ENCODE measurements at regions of chr2 and their contacts with region 1.

Region 1: DNA sequence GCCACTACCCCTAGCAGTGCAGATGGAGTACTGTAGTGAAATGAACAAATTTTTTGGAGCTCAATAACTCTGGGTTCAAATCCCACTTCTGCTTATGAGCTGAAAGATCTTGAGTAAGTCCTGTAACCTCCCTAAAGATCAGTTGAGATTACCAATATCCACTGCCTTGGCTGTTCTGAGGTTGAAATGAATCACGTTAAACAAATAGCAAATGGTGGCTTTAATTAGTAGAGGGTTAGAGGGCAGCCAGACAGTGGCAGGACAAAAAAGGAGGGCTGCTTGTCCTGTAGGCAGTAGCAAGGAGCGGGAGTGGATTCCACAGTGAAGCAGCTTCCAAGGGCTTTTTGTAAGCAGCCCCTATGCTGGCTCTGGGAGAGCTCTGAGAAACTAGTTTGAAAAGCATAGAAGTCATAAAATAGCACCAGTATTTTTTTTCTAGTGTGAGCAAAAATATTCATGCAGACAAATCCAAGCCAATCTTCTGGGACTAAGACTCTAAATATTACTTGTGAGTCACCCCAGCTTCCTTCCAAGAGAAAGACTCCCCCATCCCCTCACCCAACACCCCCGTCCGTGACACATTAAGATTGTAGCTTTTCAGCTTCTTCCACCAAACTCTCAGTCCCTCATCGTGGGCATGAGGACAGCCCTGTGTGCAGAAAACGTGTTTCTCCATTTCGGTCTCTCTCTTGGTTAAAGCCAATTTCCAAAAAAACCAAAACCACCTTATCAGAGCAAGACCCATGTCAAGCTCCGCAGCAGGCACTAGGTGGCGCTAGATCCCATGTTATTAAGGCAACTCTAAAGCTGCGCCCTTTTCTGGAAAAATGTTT is 123.5 kb upstream of the LGALSL start:
- DNase-seq: peak; percentile 84
- H3K4me3 Mint-ChIP-seq: peak overlapping the region; percentile 41
- H3K27ac Mint-ChIP-seq: peak overlapping the region; percentile 66
- H3K4me1 Mint-ChIP-seq: peaks cover 58% of the 10 kb centered on the region
- H3K27me3 Mint-ChIP-seq: peaks cover 40% of the 10 kb centered on the region

Region 2: DNA sequence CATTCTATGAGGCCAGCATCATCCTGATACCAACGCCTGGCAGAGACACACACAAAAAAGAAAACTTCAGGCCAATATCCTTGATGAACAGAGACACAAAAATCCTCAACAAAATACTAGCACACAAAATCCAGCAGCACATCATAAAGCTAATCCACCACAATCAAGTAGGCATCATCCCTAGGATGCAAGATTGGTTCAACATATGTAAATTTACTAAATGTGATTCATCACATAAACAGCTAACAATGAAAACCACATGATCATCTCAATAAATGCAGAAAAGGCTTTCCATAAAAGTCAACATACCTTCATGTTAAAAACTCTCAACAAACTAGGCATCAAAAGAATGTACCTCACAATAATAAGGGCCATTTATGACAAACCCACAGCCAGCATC is 807.5 kb before region 1 on chr2:
- CTCF ChIA-PET with region 1: no interaction called
- DNase-seq: no peak
- H3K4me3 Mint-ChIP-seq: no peak overlapping the region
- H3K27ac Mint-ChIP-seq: no peak overlapping the region
- H3K4me1 Mint-ChIP-seq: no peaks in the 10 kb centered on the region
- H3K27me3 Mint-ChIP-seq: no peaks in the 10 kb centered on the region

Region 3: GRCh38 chr2:64052468-64053241 is 277.8 kb before region 1 on chr2:
- CTCF ChIA-PET with region 1: interaction called, 180 read pairs
- DNase-seq: peak; percentile 41
- H3K4me3 Mint-ChIP-seq: no peak overlapping the region
- H3K27ac Mint-ChIP-seq: no peak overlapping the region
- H3K4me1 Mint-ChIP-seq: peaks cover 48% of the 10 kb centered on the region
- H3K27me3 Mint-ChIP-seq: no peaks in the 10 kb centered on the region

Region 4: GRCh38 chr2:64288321-64289193 is 41.9 kb before region 1 on chr2:
- CTCF ChIA-PET with region 1: no interaction called
- DNase-seq: no peak
- H3K4me3 Mint-ChIP-seq: no peak overlapping the region
- H3K27ac Mint-ChIP-seq: no peak overlapping the region
- H3K4me1 Mint-ChIP-seq: no peaks in the 10 kb centered on the region
- H3K27me3 Mint-ChIP-seq: peaks cover 20% of the 10 kb centered on the region

Region 5: DNA sequence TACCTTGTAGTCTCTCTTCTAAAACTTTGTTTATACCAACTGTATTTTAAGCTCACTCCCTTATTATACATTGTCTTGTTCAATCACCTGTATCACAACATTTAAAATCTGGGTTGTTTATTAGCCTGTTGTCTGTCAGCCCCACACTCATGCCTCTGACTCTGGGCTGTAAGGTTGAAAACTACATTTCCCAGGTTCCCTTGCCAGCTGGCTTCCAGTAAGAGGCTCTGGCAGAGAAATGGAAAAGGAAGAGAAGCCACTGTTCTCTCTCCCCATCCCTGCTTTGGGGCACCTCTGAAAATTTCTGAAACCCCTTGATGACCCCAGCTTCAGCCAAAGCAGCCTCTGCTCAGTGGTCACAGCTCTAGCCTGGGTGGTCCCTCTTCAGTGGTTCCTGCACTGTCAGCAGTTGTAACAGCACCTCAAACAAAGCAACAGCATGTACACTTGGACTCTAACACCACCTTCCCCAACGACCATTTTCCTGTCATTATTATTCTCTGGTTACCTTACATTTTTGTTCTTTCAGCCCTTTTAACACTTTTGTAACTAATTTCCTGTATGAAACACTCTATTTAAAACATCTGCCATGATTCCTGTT is 14.6 kb after region 1 on chr2:
- CTCF ChIA-PET with region 1: interaction called, 10 read pairs
- DNase-seq: no peak
- H3K4me3 Mint-ChIP-seq: no peak overlapping the region
- H3K27ac Mint-ChIP-seq: no peak overlapping the region
- H3K4me1 Mint-ChIP-seq: no peaks in the 10 kb centered on the region
- H3K27me3 Mint-ChIP-seq: peaks cover 27% of the 10 kb centered on the region

Region 6: DNA sequence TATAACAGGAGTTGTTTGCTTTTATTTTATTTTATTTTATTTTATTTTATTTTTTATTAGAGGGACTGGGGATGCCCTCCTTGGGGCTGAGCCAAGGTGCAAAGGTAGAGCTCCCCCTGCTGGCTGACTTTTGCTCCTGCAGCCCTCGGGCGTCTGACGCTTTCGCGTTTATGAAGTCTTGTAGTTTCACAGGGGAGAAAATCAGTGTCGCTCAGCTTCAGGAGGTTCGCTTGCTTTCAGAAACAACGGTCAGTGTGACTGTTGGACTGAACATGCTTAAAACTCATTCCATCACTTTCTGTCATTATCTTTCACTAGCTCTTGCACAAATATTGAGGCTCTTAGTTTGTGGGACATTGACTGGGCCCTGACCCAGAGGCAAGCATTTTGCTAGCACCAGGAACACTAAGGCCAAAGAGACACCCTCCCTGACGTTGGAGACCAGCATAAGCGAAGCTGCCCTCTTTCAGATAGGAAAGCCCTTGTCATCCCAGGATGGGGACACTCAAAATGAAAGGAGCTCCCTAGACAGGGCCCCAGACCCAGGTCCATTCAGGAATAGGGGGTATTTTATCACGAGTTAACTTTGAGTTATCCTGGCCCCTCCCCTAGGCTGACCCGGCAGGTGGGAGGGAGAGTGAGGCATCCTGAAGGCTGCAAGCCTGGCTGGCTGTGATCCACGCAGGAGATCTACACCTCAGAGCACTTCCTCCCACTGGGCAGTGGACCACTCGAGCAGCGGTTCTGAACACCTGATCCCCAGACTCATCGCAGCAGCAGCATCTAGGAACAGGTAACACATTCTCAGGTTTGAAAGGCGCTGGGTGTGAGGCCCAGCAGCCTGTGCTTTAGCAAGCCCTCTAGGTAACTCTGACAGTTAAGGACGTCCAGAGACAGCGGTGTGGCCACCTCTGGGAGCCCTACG is 157.8 kb after region 1 on chr2:
- CTCF ChIA-PET with region 1: interaction called, 211 read pairs
- DNase-seq: peak; percentile 86
- H3K4me3 Mint-ChIP-seq: no peak overlapping the region
- H3K27ac Mint-ChIP-seq: no peak overlapping the region
- H3K4me1 Mint-ChIP-seq: peaks cover 33% of the 10 kb centered on the region
- H3K27me3 Mint-ChIP-seq: peaks cover 56% of the 10 kb centered on the region

Region 7: GRCh38 chr2:64562148-64562784 is 231.8 kb after region 1 on chr2:
- CTCF ChIA-PET with region 1: interaction called, 23 read pairs
- DNase-seq: no peak
- H3K4me3 Mint-ChIP-seq: no peak overlapping the region
- H3K27ac Mint-ChIP-seq: no peak overlapping the region
- H3K4me1 Mint-ChIP-seq: peaks cover 27% of the 10 kb centered on the region
- H3K27me3 Mint-ChIP-seq: no peaks in the 10 kb centered on the region